Activated CD4-positive, alpha-beta memory T cell treated with anti-CD3 and anti-CD28 coated beads, Interleukin-2, amount 10 ng/mL, durations not matched to agents 7 days and 5 days (primary cell): ENCODE measurements at regions of chr6 and their contacts with region 1.

Region 1: DNA sequence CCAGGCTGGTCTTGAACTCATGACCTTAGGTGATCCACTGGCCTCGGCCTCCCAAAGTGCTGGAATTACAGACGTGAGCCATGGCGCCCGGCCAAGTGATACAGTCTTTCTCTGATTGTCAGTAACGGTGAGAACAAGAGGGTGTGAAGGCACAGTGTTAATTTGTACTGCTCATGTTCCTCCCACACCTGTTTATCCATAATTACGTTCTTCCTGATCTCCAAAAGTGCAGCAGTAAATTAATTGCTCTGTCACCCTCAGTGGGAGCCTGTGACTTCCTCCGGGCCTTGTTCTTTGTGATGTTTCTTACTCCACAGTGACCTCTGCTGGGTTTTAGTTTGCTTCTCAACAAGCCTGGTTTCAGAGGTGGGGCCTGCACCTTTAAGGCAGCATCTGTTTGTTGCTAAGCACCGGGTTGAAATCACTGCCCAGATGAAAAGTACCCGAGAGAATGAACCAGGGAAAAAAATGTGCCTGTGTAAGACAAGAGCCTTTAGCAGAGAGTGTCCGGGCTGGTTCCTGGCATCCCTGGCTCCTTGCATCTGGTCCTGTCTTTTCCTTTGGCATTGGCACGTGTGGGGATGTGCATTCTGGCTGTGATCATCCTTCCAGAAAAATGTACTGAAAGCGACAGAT is 89.1 kb upstream of the CLDN20 start:
- DNase-seq: peak; percentile 72
- H3K4me3 Mint-ChIP-seq: no peak overlapping the region
- H3K27ac Mint-ChIP-seq: peak overlapping the region; percentile 9
- H3K4me1 Mint-ChIP-seq: peaks cover 48% of the 10 kb centered on the region
- H3K27me3 Mint-ChIP-seq: no peaks in the 10 kb centered on the region

Region 2: DNA sequence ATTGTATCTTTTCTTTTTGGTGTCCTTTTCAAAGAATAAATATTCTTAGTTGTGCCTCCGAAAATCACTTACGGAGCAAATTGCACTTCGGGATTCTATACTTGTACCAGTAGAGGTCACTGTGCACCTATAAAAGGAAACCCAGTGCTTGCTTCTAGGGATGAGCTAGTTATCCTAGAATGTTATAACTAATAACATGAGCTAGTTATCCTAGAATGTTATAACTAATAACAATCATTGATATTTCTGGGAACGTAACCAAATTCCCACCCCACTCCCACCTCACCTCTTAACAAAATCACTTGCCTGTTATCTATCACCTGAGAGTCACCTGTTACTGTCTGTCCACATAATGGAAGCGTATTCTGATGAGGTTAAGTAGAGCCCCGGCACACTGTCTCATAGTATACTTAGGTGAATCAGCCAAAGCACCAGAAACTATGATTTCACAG is 306.5 kb before region 1 on chr6:
- CTCF ChIA-PET with region 1: interaction called, 22 read pairs
- POLR2A ChIA-PET with region 1: interaction called, 3 read pairs
- DNase-seq: no peak
- H3K4me3 Mint-ChIP-seq: no peak overlapping the region
- H3K27ac Mint-ChIP-seq: no peak overlapping the region
- H3K4me1 Mint-ChIP-seq: peaks cover 4% of the 10 kb centered on the region
- H3K27me3 Mint-ChIP-seq: no peaks in the 10 kb centered on the region

Region 3: GRCh38 chr6:154945206-154945885 is 229.3 kb before region 1 on chr6:
- CTCF ChIA-PET with region 1: no interaction called
- POLR2A ChIA-PET with region 1: no interaction called
- DNase-seq: no peak
- H3K4me3 Mint-ChIP-seq: no peak overlapping the region
- H3K27ac Mint-ChIP-seq: no peak overlapping the region
- H3K4me1 Mint-ChIP-seq: no peaks in the 10 kb centered on the region
- H3K27me3 Mint-ChIP-seq: no peaks in the 10 kb centered on the region

Region 4: GRCh38 chr6:155154158-155154830 is 20.4 kb before region 1 on chr6:
- CTCF ChIA-PET with region 1: interaction called, 37 read pairs
- POLR2A ChIA-PET with region 1: interaction called, 108 read pairs
- DNase-seq: peak; percentile 54
- H3K4me3 Mint-ChIP-seq: peak overlapping the region; percentile 62
- H3K27ac Mint-ChIP-seq: peak overlapping the region; percentile 91
- H3K4me1 Mint-ChIP-seq: peaks cover 82% of the 10 kb centered on the region
- H3K27me3 Mint-ChIP-seq: no peaks in the 10 kb centered on the region

Region 5: GRCh38 chr6:155248008-155249001 is 73.6 kb after region 1 on chr6:
- CTCF ChIA-PET with region 1: interaction called, 38 read pairs
- POLR2A ChIA-PET with region 1: no interaction called
- DNase-seq: peak; percentile 28
- H3K4me3 Mint-ChIP-seq: no peak overlapping the region
- H3K27ac Mint-ChIP-seq: no peak overlapping the region
- H3K4me1 Mint-ChIP-seq: no peaks in the 10 kb centered on the region
- H3K27me3 Mint-ChIP-seq: no peaks in the 10 kb centered on the region